ENCODE measurements at regions of chr7 and their contacts with region 1.

Region 1: GRCh38 chr7:50679218-50680007 is 103.3 kb downstream of the GRB10 start:
- DNase-seq: no peak
- ATAC-seq: peak; percentile 62 to 67
- H3K4me3 ChIP-seq: no peak overlapping the region
- H3K27ac ChIP-seq: peak overlapping the region; percentile 61
- H3K4me1 ChIP-seq: peaks cover 15% of the 10 kb centered on the region
- H3K27me3 ChIP-seq: no peaks in the 10 kb centered on the region

Region 2: GRCh38 chr7:50475340-50475739 is 204.1 kb before region 1 on chr7:
- intact Hi-C with region 1: loop called in 1 of 4 experiments (anchors 10 kb)
- DNase-seq: no peak
- ATAC-seq: no peak
- H3K4me3 ChIP-seq: no peak overlapping the region
- H3K27ac ChIP-seq: no peak overlapping the region
- H3K4me1 ChIP-seq: no peaks in the 10 kb centered on the region
- H3K27me3 ChIP-seq: no peaks in the 10 kb centered on the region

Region 3: DNA sequence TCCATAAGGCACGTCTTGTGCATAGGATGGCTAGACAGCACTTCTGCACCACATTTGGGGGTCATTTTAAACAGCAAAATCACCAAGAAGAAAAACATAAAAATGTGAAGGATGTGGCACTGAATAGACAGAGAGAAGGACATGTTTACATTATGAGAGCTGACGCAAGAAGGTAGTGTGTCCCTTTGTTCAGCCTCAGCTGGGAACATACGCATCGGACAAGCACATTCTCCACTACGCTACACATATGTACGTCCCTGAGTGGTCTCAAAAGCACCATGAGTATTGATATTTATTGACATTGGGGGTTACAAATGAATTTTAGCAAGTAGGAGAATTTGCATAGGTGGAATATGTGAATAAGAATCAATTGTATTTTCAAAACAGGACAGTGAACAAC is 134.4 kb before region 1 on chr7:
- intact Hi-C with region 1: no loop called
- DNase-seq: no peak
- ATAC-seq: no peak
- H3K4me3 ChIP-seq: no peak overlapping the region
- H3K27ac ChIP-seq: no peak overlapping the region
- H3K4me1 ChIP-seq: no peaks in the 10 kb centered on the region
- H3K27me3 ChIP-seq: no peaks in the 10 kb centered on the region

Region 4: DNA sequence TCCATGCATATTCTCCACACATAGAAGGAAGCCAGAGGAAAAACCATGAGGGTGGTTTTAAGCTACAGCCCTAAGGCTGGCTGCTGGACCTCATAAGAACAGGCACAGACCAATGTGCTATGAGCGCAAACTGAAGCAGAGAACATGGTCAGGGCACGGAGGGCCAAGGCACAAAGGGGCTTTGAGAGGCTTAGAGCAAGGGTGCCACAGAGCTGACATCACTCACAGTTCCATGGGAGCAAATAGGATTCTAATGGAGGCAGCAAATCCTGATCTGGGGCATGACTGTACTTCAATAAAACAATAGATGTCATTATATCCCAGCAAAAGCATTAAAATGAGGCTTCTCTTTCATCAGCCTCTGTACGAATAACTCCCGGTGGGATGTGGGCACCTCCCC is 474.8 kb after region 1 on chr7:
- intact Hi-C with region 1: loop called in 2 of 4 experiments (anchors 10 kb)
- DNase-seq: no peak
- ATAC-seq: peak; percentile 26 to 54
- H3K4me3 ChIP-seq: no peak overlapping the region
- H3K27ac ChIP-seq: no peak overlapping the region
- H3K4me1 ChIP-seq: no peaks in the 10 kb centered on the region
- H3K27me3 ChIP-seq: no peaks in the 10 kb centered on the region

Measured in right cardiac atrium (tissue), 5 donors.